Activated CD8-positive, alpha-beta memory T cell treated with anti-CD3 and anti-CD28 coated beads, Interleukin-2, amount 10 ng/mL, durations not matched to agents 7 days and 5 days (primary cell): ENCODE measurements at regions of chr15 and their contacts with region 1.

Region 1: DNA sequence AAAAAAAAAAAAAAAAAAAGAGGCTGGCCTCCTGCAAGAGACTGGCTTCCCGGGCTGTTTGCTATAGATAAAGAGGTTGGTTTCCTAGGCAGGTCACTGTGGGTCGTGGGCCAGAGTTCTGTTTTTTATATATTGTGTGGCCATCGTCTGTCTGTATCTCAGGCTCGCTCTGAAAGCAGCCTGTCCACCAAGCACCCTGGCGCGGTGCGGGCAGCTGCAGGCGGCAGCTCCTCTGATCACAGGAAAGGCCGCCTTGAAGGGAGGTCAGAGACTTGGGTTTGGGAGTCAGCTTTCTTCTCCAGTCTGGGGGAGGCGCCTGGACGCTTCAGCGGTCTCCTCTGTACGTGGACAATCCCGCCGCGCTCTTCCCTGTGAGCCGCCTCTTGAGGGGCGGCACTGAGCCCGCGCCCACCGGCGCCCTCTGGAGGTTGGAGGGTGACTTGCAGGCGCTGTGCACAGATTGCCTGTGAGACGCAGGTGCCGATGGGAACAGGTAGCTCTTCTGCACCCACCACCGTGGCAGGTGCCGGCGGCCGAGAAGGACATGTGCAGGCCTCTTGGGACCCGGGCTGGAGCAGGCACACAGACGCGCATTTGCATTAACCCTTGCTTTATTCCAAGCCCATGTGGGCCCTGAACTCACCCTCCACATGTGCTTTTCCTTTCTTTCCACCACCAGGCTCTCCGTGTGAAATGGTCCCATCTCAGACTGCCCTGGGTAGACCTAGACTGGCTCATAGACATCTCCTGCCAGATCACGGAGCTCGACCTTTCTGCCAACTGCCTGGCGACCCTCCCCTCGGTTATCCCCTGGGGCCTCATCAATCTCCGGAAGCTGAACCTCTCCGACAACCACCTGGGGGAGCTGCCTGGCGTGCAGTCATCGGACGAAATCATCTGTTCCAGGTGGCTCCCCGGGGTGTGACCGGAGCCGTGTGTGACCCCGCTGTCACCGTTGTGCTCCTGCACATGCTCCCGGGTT is 89.3 kb downstream of the LRRK1 start:
- DNase-seq: peak; percentile 87
- ATAC-seq: peak; percentile 95
- H3K4me3 Mint-ChIP-seq: peak overlapping the region; percentile 82
- H3K27ac Mint-ChIP-seq: no peak overlapping the region
- H3K4me1 Mint-ChIP-seq: peaks cover 23% of the 10 kb centered on the region
- H3K27me3 Mint-ChIP-seq: peaks cover 26% of the 10 kb centered on the region

Region 2: GRCh38 chr15:100627789-100628395 is 380.6 kb before region 1 on chr15:
- CTCF ChIA-PET with region 1: interaction called, 18 read pairs
- DNase-seq: peak; percentile 75
- ATAC-seq: peak; percentile 89
- H3K4me3 Mint-ChIP-seq: no peak overlapping the region
- H3K27ac Mint-ChIP-seq: no peak overlapping the region
- H3K4me1 Mint-ChIP-seq: peaks cover 2% of the 10 kb centered on the region
- H3K27me3 Mint-ChIP-seq: no peaks in the 10 kb centered on the region

Region 3: GRCh38 chr15:100987143-100987542 is 21.3 kb before region 1 on chr15:
- CTCF ChIA-PET with region 1: interaction called, 15 read pairs
- DNase-seq: no peak
- ATAC-seq: no peak
- H3K4me3 Mint-ChIP-seq: no peak overlapping the region
- H3K27ac Mint-ChIP-seq: no peak overlapping the region
- H3K4me1 Mint-ChIP-seq: no peaks in the 10 kb centered on the region
- H3K27me3 Mint-ChIP-seq: peaks cover 23% of the 10 kb centered on the region

Region 4: DNA sequence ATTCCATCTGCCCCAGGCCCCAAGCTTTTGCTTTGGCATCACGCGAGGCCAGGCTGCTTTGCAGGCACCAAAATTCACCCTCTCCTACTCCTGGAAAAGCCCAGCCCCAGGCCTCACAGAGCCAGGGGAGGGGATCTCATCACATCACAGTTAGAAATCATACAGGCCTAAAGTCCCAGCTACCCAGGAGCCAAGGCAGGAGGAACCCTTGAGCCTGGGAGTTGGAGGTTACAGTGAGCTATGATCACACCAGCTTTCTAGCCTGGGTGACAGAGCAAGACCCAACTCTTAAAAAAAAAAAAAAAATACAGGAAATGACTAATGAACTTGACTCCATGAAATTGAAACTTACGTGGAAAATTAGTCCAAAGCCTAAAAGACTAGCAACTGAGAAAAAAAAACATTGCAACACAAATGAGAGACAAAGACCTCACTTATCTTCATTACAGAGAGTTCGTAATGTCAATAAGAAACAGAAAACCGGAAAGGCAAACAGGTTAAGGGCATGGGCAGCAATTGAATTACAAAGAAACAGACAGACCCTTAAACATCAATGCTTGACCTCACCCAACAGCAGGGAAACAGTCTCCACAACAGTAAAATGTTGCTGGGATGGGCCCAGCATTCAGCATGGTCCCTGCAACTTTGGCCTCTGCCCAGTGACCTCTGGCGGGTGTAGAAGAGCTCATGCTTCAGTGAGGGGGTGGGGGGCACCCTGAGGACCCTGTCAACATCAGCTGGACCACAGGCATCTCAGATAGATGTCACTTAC is 62.2 kb after region 1 on chr15:
- CTCF ChIA-PET with region 1: interaction called, 10 read pairs
- DNase-seq: no peak
- ATAC-seq: peak; percentile 45
- H3K4me3 Mint-ChIP-seq: no peak overlapping the region
- H3K27ac Mint-ChIP-seq: peak overlapping the region; percentile 82
- H3K4me1 Mint-ChIP-seq: peaks cover 10% of the 10 kb centered on the region
- H3K27me3 Mint-ChIP-seq: peaks cover 7% of the 10 kb centered on the region

Region 5: DNA sequence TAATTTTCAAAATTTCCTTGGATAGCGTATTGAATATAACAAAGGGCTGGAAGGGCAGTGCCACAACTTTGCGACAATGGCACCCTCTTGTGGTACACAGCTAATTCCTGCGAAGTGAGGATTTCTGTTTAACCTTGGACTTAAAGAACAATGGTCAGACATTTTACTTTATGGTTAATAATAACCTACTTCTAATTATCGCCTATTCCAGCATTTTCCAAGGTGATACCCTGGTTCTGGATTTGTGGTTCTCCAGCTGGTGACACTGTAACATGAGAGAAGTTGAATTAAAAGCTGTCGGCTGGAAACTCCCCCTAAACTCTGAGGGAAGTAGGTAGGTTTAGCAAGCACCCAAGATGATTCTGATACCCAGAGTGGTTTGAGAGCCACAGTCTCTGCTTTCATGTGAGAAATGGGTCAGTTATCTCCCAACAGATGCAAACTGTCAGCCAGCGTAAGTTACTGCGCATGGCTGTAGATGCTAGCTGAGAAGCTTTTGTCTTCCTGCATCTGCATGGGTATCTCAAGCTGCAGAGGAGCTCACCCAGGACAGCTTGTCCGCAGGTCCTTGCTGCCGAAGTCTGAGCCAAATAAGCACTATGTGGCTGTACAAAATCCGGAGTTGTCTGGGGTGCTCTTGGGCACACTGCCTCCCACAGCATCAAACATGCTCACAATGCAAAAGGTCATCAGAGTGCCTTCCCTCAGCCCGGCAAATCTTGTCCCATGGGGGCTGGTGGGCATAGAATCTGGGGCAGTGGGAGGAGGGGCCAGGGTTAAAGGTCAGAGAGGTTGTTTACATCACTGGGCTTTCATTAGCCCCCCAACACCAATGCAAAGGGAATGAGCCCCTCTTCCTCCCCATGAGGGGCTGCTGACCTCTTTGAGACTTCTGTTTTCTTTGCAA is 250.0 kb after region 1 on chr15:
- CTCF ChIA-PET with region 1: interaction called, 108 read pairs
- DNase-seq: peak; percentile 69
- ATAC-seq: peak; percentile 71
- H3K4me3 Mint-ChIP-seq: no peak overlapping the region
- H3K27ac Mint-ChIP-seq: no peak overlapping the region
- H3K4me1 Mint-ChIP-seq: peaks cover 34% of the 10 kb centered on the region
- H3K27me3 Mint-ChIP-seq: peaks cover 21% of the 10 kb centered on the region